ENCODE measurements at regions of chr19 and their contacts with region 1.

Region 1: GRCh38 chr19:17215125-17215971 is at the start of gene USE1:
- DNase-seq: peak; percentile 91 to 94 (median 93)
- ATAC-seq: peak; percentile 96
- H3K4me3 ChIP-seq: peak within 1 kb of the TSS in 1 of 2 donors; percentile 59
- H3K27ac ChIP-seq: peak within 1 kb of the TSS; percentile 84 to 98 (median 90)
- H3K4me1 ChIP-seq: peaks cover 24% of the 10 kb centered on the region
- H3K27me3 ChIP-seq: no peaks in the 10 kb centered on the region
- CTCF ChIP-seq: peak in 1 of 7 experiments; percentile 20
- POLR2A ChIP-seq: peak; percentile 83 to 94 (median 88)
- total RNA-seq, gene USE1: 13.2 to 20.1 TPM

Region 2: DNA sequence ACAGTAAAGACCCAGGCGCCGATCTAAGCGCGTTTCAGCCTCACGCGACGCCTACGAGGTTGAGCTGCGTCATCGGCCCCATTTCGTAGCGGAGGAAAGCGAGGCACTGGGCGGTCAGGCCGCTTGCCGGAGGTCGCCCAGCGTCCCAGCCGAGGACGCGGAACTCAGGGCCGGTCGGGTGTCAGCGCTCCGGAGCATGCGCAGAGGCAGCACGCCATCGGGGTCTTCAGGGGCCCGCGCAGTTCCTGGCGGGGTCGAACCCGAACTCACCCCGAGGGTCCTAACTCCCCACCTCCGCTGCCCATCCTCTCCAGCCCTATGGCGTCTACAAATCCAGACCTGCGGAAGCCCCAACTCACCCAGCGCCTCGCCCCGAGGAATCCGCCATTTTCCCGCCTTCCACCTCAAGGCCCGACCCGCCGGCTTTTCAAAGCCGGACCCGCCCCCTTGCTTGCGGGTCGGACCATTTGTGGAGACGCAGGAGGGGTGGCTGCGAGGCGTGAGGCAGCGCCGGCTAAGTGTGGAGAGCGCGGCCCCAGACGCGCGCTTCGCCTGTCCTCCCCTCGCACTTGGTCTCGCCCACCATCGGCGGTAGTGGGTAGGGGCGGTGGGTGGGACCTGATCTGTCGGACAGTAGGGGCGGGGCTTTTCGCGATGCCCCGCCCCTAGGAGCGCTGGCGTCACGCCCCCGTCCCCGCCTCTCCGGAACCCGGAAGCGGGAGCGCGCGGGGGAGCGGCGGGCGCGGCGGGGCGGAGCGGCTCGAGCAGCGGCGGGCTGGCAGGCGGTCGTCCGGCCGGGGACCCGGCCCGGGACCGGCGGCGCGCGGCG is 140.1 kb before region 1 on chr19 and contains the starts of genes HAUS8 and MYO9B:
- intact Hi-C with region 1: loop called (anchors 10 kb)
- DNase-seq: peak; percentile 99 to 100 (median 100)
- ATAC-seq: peak; percentile 99
- H3K4me3 ChIP-seq: peak within 1 kb of the TSS; percentile 50 to 81
- H3K27ac ChIP-seq: peak within 1 kb of the TSS; percentile 56 to 87 (median 74)
- H3K4me1 ChIP-seq: peaks cover 33% of the 10 kb centered on the region
- H3K27me3 ChIP-seq: no peaks in the 10 kb centered on the region
- CTCF ChIP-seq: peak in 1 of 7 experiments; percentile 23
- POLR2A ChIP-seq: peak; percentile 8 to 64 (median 60)
- total RNA-seq, gene HAUS8: 1.6 to 2.3 TPM
- total RNA-seq, gene MYO9B: 26.2 to 56.0 TPM